ENCODE measurements at regions of chr10 and their contacts with region 1.

Region 1: GRCh38 chr10:69929575-69929974 is 123.1 kb upstream of the MACROH2A2 start:
- DNase-seq: no peak
- H3K4me3 ChIP-seq: no peak overlapping the region
- H3K27ac ChIP-seq: no peak overlapping the region
- H3K4me1 ChIP-seq: no peaks in the 10 kb centered on the region
- H3K27me3 ChIP-seq: no peaks in the 10 kb centered on the region
- CTCF ChIP-seq: no peak

Region 2: GRCh38 chr10:69866688-69867461 is 62.7 kb before region 1 on chr10:
- CTCF ChIA-PET with region 1: no interaction called
- POLR2A ChIA-PET with region 1: no interaction called
- intact Hi-C with region 1: no loop called
- DNase-seq: no peak
- H3K4me3 ChIP-seq: no peak overlapping the region
- H3K27ac ChIP-seq: peak overlapping the region; percentile 79
- H3K4me1 ChIP-seq: peaks cover 100% of the 10 kb centered on the region
- H3K27me3 ChIP-seq: no peaks in the 10 kb centered on the region
- CTCF ChIP-seq: no peak

Region 3: DNA sequence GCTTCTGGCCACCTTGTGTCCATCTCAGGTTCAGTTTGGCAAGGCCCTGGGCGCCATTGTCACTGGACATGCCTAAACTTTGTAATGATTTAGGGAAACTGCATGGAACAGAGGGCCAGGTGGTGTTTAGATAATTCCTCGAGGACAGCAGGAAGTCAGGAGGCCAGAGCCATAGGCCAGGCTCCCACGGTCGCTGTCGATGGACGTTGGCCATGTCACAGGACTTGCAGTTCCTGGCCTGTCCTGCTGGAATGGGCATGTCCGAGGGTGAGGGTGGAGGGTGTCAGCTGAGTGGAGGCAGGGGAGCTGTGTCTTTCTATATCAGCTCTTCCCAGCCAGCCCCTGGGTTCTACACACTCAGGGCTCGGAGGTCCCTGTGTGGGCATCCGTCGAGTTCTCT is 15.2 kb after region 1 on chr10:
- CTCF ChIA-PET with region 1: no interaction called
- POLR2A ChIA-PET with region 1: interaction called, 14 read pairs
- intact Hi-C with region 1: no loop called
- DNase-seq: no peak
- H3K4me3 ChIP-seq: no peak overlapping the region
- H3K27ac ChIP-seq: no peak overlapping the region
- H3K4me1 ChIP-seq: no peaks in the 10 kb centered on the region
- H3K27me3 ChIP-seq: no peaks in the 10 kb centered on the region
- CTCF ChIP-seq: no peak